Activated naive CD4-positive, alpha-beta T cell treated with anti-CD3 and anti-CD28 coated beads, Interleukin-2, amount 10 ng/mL, durations not matched to agents 7 days and 5 days (primary cell): ENCODE measurements at regions of chr11 and their contacts with region 1.

Region 1: GRCh38 chr11:111926505-111927391 is 8.0 kb downstream of the C11orf52 start:
- DNase-seq: peak; percentile 96
- H3K4me3 Mint-ChIP-seq: peak overlapping the region; percentile 68
- H3K27ac Mint-ChIP-seq: peak overlapping the region; percentile 91
- H3K4me1 Mint-ChIP-seq: peaks cover 18% of the 10 kb centered on the region
- H3K27me3 Mint-ChIP-seq: peaks cover 23% of the 10 kb centered on the region

Region 2: GRCh38 chr11:111777094-111778046 is 149.4 kb before region 1 on chr11:
- CTCF ChIA-PET with region 1: no interaction called
- DNase-seq: peak; percentile 39
- H3K4me3 Mint-ChIP-seq: no peak overlapping the region
- H3K27ac Mint-ChIP-seq: no peak overlapping the region
- H3K4me1 Mint-ChIP-seq: no peaks in the 10 kb centered on the region
- H3K27me3 Mint-ChIP-seq: no peaks in the 10 kb centered on the region

Region 3: DNA sequence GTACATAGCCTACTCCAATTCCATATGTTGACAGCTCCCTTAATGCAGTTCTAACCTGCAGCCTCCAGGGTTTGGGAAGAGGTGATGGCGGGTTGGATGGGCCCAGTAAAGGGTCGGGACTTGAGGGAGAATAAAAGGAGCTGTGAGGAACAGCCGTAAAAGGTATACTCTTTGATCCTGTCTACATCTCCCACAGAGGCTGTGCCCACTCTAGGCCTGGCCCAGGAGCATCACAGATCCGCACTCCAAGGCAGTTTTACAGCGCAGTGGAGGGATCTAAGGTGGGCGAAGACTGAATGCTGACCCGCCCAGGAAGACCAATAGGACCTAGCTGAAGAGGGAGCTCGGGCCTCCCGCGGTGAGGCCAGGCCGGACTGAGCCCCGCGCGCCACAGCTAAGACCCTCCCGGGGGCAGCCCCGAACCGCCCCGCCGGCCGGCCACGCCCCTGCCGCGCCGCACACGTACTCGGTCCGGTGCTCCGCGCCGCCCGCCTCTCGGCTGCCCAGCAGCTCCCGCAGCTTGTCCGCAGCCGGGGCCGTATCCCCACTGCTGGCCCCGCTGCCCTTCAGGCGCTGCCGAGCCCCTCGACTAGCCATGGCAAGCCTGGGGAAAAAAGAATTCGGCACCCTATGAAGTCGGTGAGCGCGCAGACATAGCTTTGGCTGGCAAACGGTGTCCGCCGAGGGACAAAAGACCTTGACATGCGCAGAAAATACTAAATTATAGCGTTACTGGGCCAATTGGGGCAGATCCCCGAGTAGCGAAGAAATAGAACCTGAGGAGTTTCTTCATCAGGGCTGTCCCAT is 55.7 kb before region 1 on chr11 and contains the start of gene ALG9:
- CTCF ChIA-PET with region 1: interaction called, 13 read pairs
- DNase-seq: peak; percentile 93
- H3K4me3 Mint-ChIP-seq: peak within 1 kb of the TSS; percentile 91
- H3K27ac Mint-ChIP-seq: peak within 1 kb of the TSS; percentile 92
- H3K4me1 Mint-ChIP-seq: peaks cover 23% of the 10 kb centered on the region
- H3K27me3 Mint-ChIP-seq: no peaks in the 10 kb centered on the region

Region 4: DNA sequence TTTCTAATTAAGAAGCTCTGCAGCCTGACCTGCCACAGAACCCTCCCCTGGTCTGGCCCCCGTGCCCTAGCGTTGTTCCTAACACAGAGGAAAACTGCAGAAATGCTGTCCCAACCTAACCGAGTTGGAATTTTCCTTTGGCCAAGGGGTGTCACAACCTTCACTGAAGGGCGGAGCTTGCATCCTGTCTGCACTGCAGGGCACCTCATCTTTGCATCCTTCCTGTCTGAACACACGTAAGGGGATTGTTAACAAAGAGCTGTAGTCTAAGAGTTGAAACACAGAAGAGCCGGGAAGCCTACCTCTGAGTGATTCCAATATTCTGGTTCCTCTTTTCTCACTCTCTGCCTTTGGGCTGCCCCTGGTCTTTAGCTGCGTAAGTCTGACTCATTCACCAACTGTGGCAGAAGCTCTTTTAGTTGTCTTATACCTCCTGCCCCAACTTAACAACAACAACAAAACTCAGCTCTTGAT is 12.0 kb after region 1 on chr11:
- CTCF ChIA-PET with region 1: interaction called, 10 read pairs
- DNase-seq: peak; percentile 49
- H3K4me3 Mint-ChIP-seq: peak overlapping the region; percentile 80
- H3K27ac Mint-ChIP-seq: peak overlapping the region; percentile 80
- H3K4me1 Mint-ChIP-seq: peaks cover 45% of the 10 kb centered on the region
- H3K27me3 Mint-ChIP-seq: no peaks in the 10 kb centered on the region